Posterior vena cava (tissue), 2 donors: ENCODE measurements at regions of chr20 and their contacts with region 1.

Region 1: GRCh38 chr20:63398744-63399514 is 37.8 kb upstream of the CHRNA4 start:
- DNase-seq: no peak

Region 2: DNA sequence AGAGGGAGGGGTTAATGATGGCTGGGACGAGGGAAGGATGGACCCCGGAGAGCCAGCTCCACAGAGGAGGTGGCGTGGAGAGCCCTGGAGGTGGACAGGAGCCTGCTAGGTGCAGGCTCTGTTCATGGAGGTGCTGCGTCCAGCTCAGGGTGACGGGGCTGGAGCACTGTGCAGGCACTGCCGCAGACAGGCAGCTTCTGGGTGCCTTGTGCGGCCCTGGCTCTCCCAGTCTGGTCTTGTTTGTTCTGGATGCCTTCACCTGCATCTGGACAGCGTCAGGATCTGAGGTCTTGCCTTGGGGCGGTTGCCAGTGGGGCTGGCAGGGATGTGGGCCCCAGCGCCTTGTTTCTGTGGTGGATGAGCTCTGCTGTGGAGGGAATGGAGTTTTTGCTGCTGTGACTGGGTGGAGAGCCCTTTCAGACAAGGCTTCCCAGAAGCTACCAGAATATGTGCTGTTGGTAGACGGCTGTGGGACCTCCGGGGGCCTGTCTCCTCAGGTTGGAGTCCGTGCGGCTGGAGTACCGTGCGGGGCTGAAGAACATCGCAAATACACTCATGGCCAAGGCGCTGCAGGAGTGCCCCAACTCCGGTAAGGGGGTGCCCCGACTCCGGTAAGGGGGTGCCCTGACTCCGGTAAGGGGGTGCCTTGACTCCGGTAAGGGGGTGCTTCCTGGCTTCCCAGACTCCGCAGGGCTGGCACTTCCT is 629.2 kb after region 1 on chr20:
- intact Hi-C with region 1: loop called in 1 of 2 experiments (anchors 5 kb)
- DNase-seq: no peak